ENCODE measurements at regions of chrX and their contacts with region 1.

Region 1: DNA sequence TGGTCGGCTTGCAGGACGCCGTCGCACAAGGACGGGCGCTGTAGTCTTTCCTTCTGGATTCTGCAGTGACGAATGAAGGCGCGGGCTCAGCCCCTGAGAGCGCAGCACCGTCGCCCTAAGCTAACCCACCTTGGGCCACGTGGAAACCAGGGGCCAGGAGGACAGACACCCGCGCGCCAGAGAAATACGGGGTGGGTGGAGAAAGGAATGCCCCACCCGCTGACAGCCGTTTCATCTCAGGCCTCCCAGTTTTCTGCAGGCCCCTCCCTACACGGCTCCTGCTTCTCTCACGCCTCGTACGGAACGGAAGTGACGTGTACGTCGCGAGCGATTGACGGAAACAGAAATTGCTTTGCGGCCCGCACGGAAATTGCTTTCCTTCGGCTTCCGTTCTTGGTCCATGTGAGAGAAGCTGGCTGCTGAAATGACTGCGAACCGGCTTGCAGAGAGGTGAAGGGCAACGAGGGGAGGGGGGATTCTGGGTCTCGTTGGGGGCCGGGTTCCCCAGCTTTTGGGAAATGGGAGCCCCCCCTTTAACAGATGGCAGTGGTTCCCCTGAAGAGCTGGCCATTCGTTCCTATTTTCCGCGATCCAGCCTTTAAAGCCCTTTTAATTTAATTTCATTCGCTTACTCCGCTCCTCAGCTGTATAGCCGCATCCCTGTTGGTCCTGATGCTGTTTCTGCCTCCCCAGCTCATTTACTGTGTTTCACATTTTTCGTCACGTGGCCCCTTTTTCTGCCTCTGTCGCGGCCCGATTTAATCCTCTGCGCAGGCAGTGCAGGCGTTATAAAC is at the start of gene UTP14A:
- DNase-seq: peak; percentile 70
- H3K4me3 ChIP-seq: peak within 1 kb of the TSS; percentile 79
- H3K27ac ChIP-seq: peak within 1 kb of the TSS; percentile 70
- H3K27me3 ChIP-seq: no peaks in the 10 kb centered on the region
- CTCF ChIP-seq: no peak
- polyA plus RNA-seq, gene UTP14A: 18.0 and 20.8 TPM in 2 replicates

Region 2: DNA sequence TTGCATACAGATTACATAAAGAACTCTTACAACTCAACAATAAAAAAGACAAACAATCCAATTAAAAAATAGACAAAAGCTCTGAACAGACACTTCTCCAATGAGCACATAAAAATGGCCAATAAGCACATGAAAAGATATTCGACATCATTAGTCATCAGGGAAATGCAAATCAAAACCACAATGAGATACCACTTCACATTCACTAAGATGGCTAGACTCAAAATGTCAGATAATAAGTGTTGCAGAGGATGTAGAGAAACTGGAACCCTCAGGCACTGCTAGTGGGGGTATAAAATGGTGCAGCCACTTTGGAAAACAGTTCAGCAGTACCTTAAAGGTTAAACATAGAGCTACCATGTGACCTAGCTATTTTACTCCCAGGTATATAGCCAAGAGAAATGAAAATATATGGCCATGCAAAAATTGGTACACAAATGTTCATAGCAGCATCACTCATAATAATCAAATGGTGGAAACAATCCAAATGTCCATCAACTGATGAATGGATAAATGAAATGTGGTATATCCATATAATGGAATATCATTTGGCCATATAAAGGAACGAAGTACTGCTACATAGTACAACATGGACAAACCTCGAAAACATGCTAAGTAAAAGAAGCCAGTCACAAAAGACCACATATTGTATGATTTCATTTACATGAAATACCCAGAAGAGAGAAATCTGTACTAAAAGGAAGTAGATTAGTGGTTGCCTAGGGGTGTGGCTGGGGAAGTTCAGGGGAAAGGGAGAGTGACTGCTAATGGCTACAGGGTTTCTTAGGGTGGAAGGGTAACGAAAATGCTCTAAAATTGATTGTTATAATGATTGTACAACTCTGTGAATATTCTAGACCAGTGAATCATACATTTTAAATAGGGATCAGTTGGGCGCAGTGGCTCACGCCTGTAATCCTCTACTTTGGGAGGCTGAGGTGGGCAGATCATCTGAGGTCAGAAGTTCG is 96.9 kb before region 1 on chrX:
- CTCF ChIA-PET with region 1: no interaction called
- POLR2A ChIA-PET with region 1: no interaction called
- DNase-seq: no peak
- H3K4me3 ChIP-seq: no peak overlapping the region
- H3K27ac ChIP-seq: no peak overlapping the region
- H3K27me3 ChIP-seq: no peaks in the 10 kb centered on the region
- CTCF ChIP-seq: no peak

Region 3: DNA sequence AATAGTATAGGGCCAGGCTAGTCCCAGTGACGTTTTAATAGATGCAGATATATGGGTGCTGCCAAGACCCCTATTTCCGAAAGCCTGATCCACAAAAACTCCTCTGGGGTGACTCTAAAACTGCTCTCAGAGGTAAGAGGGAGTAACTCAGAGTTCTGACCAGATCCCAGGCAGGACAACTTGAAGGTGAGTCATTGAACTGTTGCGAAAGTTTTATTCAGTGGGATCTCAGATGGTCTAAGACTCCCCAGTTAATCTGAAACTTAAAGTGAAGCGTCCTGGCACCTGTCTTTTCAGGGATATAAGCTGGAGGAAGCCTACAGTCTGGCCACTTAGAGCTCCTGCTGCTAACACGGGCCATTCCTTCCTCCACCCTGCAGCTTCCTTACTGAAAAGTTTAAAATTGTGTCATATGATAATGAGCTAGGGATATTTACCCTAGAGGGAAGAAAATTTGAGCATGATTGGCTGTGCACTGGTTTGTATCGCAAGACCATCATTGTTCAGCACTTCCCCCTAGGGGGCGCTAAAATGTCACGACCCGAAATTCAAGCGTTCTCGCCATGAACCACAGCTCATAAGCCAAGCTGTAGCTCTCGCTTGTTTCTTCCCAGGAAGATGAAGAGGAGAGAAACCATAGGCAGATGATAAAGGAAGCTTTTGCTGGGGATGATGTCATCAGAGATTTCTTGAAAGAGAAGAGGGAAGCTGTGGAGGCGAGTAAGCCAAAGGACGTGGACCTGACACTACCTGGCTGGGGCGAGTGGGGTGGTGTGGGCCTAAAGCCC is 19.5 kb after region 1 on chrX:
- CTCF ChIA-PET with region 1: interaction called, 21 read pairs
- POLR2A ChIA-PET with region 1: no interaction called
- DNase-seq: peak; percentile 53
- H3K4me3 ChIP-seq: no peak overlapping the region
- H3K27ac ChIP-seq: peak overlapping the region; percentile 52
- H3K27me3 ChIP-seq: no peaks in the 10 kb centered on the region
- CTCF ChIP-seq: peak; percentile 66